ENCODE measurements at regions of chr4 and their contacts with region 1.

Region 1: GRCh38 chr4:184474263-184475095 is at the start of gene IRF2:
- DNase-seq: peak; percentile 99
- ATAC-seq: peak; percentile 76
- H3K4me3 Mint-ChIP-seq: peak within 1 kb of the TSS; percentile 88
- H3K27ac Mint-ChIP-seq: peak within 1 kb of the TSS; percentile 94
- H3K4me1 Mint-ChIP-seq: peaks cover 59% of the 10 kb centered on the region
- H3K27me3 Mint-ChIP-seq: no peaks in the 10 kb centered on the region
- total RNA-seq, gene IRF2: 50.1 to 68.9 TPM

Region 2: GRCh38 chr4:183504064-183504929 is 970.2 kb before region 1 on chr4:
- CTCF ChIA-PET with region 1: no interaction called
- POLR2A ChIA-PET with region 1: no interaction called
- intact Hi-C with region 1: loop called in 1 of 2 experiments (anchors 2 kb)
- DNase-seq: peak; percentile 99
- ATAC-seq: peak; percentile 80
- H3K4me3 Mint-ChIP-seq: peak overlapping the region; percentile 85
- H3K27ac Mint-ChIP-seq: peak overlapping the region; percentile 95
- H3K4me1 Mint-ChIP-seq: peaks cover 33% of the 10 kb centered on the region
- H3K27me3 Mint-ChIP-seq: no peaks in the 10 kb centered on the region

Region 3: DNA sequence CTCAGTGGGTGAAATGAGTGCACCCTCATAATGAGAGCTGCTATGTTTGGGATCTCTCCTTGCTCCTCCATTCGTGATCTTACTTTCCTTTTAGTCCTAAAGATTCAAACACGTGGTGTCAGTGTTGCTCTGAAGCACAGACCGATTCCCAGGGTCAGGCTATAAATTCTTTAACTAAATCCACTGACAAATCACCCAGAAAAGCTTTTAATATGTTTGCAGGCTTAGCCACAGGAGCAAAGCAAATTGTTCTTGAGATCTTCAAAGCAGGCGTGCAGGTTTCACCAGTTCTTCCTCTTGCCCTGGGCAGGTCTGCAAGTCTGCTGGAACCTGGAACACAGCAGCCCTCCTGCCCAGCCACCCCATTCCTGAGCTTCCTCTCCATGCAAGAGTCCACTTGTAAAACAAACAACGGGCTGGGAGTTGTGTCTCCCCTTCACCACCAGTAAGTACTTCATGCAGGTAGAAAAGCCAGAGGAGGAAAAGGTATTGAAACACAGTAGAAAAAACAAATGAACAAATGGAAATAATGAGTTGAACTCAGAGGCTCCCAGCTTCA is 186.7 kb before region 1 on chr4:
- CTCF ChIA-PET with region 1: no interaction called
- POLR2A ChIA-PET with region 1: interaction called, 5 read pairs
- intact Hi-C with region 1: loop called (anchors 1 to 2 kb)
- DNase-seq: no peak
- ATAC-seq: no peak
- H3K4me3 Mint-ChIP-seq: no peak overlapping the region
- H3K27ac Mint-ChIP-seq: peak overlapping the region; percentile 40
- H3K4me1 Mint-ChIP-seq: peaks cover 56% of the 10 kb centered on the region
- H3K27me3 Mint-ChIP-seq: peaks cover 4% of the 10 kb centered on the region

Region 4: GRCh38 chr4:184457535-184458249 is 16.8 kb before region 1 on chr4:
- CTCF ChIA-PET with region 1: interaction called, 3 read pairs
- POLR2A ChIA-PET with region 1: interaction called, 7 read pairs
- intact Hi-C with region 1: loop called (anchors 1 to 2 kb)
- DNase-seq: no peak
- ATAC-seq: no peak
- H3K4me3 Mint-ChIP-seq: no peak overlapping the region
- H3K27ac Mint-ChIP-seq: no peak overlapping the region
- H3K4me1 Mint-ChIP-seq: peaks cover 78% of the 10 kb centered on the region
- H3K27me3 Mint-ChIP-seq: no peaks in the 10 kb centered on the region

Region 5: DNA sequence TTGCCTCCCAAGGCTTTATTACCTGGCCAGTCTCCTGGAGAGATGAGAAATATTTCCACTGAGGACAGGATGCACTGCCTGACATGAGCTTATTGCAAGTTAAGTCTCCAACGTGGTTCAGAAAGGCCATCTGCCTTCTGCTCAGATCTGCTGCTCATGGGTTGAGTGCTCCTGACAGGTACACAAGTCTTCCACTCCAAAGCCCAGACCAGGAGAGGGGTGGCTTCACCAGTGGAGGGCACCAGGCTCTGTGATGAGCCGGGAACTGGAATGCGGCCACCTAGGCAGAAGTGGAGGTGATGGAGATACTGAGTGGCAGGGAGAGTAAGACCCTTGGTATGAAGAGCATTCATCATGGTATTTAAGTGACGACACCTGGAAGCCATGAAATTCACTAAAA is 79.4 kb after region 1 on chr4:
- CTCF ChIA-PET with region 1: no interaction called
- POLR2A ChIA-PET with region 1: no interaction called
- intact Hi-C with region 1: no loop called
- DNase-seq: no peak
- ATAC-seq: no peak
- H3K4me3 Mint-ChIP-seq: no peak overlapping the region
- H3K27ac Mint-ChIP-seq: no peak overlapping the region
- H3K4me1 Mint-ChIP-seq: peaks cover 5% of the 10 kb centered on the region
- H3K27me3 Mint-ChIP-seq: no peaks in the 10 kb centered on the region

Region 6: GRCh38 chr4:184575306-184575705 is 100.8 kb after region 1 on chr4:
- CTCF ChIA-PET with region 1: no interaction called
- POLR2A ChIA-PET with region 1: interaction called, 5 read pairs
- intact Hi-C with region 1: loop called in 1 of 2 experiments (anchors 1 kb)
- DNase-seq: no peak
- ATAC-seq: peak; percentile 67
- H3K4me3 Mint-ChIP-seq: no peak overlapping the region
- H3K27ac Mint-ChIP-seq: peak overlapping the region; percentile 47
- H3K4me1 Mint-ChIP-seq: peaks cover 22% of the 10 kb centered on the region
- H3K27me3 Mint-ChIP-seq: no peaks in the 10 kb centered on the region

Region 7: GRCh38 chr4:184825896-184826690 is 351.6 kb after region 1 on chr4 and contains the start of gene ACSL1:
- CTCF ChIA-PET with region 1: no interaction called
- POLR2A ChIA-PET with region 1: no interaction called
- intact Hi-C with region 1: loop called in 1 of 2 experiments (anchors 1 kb)
- DNase-seq: peak; percentile 88
- ATAC-seq: peak; percentile 82
- H3K4me3 Mint-ChIP-seq: peak within 1 kb of the TSS; percentile 87
- H3K27ac Mint-ChIP-seq: peak within 1 kb of the TSS; percentile 89
- H3K4me1 Mint-ChIP-seq: peaks cover 34% of the 10 kb centered on the region
- H3K27me3 Mint-ChIP-seq: no peaks in the 10 kb centered on the region
- total RNA-seq, gene ACSL1: 17.1 to 17.2 TPM

Measured in activated CD4-positive, alpha-beta T cell treated with anti-CD3 and anti-CD28 coated beads for 36 hours (primary cell).